AG04450 (cell line): ENCODE measurements at regions of chr1 and their contacts with region 1.

Region 1: GRCh38 chr1:155017041-155017945 is 14.7 kb downstream of the ZBTB7B start:
- DNase-seq: peak; percentile 59
- H3K4me3 ChIP-seq: peak overlapping the region; percentile 45
- H3K27ac ChIP-seq: peak overlapping the region; percentile 61
- H3K27me3 ChIP-seq: no peaks in the 10 kb centered on the region
- CTCF ChIP-seq: peak; percentile 96

Region 2: DNA sequence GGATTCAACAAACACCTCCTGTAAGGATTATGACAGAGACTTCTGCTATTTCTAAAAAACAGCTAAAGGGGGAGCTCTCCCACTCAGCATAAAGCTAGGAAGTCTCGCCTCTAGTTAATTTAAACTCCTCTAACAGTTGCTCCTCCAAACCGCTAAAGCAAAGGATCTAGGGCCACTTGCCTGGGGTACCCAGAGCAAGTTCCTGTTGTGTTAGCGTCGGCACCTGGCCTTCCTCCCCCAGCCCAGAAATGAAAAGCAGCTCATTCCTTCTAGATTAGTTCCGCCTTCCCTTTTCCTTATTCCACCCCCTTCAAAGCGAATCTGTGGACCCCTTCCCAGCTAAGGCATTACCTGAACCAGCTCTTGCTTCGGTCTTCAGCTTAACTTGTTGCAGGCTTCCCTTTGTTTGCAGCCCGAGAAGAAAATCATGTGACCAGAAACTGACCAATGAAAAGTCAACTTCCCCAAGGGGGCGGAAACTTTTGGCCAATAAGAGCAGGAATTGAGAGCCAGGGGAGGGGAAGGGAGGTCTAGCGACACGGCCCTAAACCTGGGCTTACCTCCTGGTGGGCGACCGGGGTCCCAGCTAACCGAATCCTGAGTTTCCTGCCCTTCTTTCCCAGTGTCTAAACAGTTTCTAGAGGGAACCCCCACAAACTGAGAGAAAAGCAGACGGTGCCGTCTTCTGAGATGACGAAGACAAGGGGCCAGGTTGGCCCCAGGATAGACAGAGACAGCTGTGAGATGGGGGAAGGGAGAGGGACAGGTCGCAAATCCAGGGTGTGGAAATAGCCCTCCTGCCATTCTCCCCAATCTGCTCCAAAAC is 61.4 kb before region 1 on chr1 and contains the start of gene PBXIP1:
- CTCF ChIA-PET with region 1: interaction called, 21 read pairs
- POLR2A ChIA-PET with region 1: interaction called, 10 read pairs
- DNase-seq: no peak
- H3K4me3 ChIP-seq: peak within 1 kb of the TSS; percentile 84
- H3K27ac ChIP-seq: peak within 1 kb of the TSS; percentile 88
- H3K27me3 ChIP-seq: no peaks in the 10 kb centered on the region
- CTCF ChIP-seq: peak; percentile 52
- polyA plus RNA-seq, gene PBXIP1: 72.2 and 87.1 TPM in 2 replicates

Region 3: GRCh38 chr1:154974063-154974807 is 43.1 kb before region 1 on chr1 and contains the start of gene CKS1B:
- CTCF ChIA-PET with region 1: interaction called, 19 read pairs
- POLR2A ChIA-PET with region 1: interaction called, 4 read pairs
- DNase-seq: peak; percentile 100
- H3K4me3 ChIP-seq: peak within 1 kb of the TSS; percentile 77
- H3K27ac ChIP-seq: peak within 1 kb of the TSS; percentile 100
- H3K27me3 ChIP-seq: no peaks in the 10 kb centered on the region
- CTCF ChIP-seq: no peak
- polyA plus RNA-seq, gene CKS1B: 66.4 and 81.3 TPM in 2 replicates

Region 4: DNA sequence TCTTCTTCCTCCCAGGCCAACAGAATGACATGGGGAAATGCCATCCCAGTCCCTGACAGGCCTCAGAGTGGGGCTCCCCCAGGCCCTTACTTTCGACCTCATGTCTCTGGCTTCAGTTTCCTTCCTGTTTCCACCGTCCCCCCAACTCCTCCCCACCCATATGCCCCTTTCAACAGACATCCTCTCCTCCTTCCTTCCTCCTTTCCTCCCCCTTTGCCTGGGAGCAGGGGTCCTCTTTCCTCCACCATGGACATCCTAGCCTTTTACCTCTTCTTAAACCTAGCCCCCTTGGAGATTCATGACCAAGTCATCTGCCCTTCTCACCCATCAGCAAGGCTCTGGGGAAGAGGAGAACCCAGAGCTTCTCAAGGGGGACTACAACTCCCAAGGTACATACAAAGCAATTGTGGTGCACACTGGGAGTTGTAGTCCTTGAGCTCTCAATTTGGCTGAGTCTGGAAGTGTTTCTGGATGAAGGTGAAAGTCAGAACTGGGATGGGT is 10.6 kb before region 1 on chr1:
- CTCF ChIA-PET with region 1: interaction called, 38 read pairs
- POLR2A ChIA-PET with region 1: interaction called, 4 read pairs
- DNase-seq: no peak
- H3K4me3 ChIP-seq: no peak overlapping the region
- H3K27ac ChIP-seq: no peak overlapping the region
- H3K27me3 ChIP-seq: no peaks in the 10 kb centered on the region
- CTCF ChIP-seq: no peak

Region 5: DNA sequence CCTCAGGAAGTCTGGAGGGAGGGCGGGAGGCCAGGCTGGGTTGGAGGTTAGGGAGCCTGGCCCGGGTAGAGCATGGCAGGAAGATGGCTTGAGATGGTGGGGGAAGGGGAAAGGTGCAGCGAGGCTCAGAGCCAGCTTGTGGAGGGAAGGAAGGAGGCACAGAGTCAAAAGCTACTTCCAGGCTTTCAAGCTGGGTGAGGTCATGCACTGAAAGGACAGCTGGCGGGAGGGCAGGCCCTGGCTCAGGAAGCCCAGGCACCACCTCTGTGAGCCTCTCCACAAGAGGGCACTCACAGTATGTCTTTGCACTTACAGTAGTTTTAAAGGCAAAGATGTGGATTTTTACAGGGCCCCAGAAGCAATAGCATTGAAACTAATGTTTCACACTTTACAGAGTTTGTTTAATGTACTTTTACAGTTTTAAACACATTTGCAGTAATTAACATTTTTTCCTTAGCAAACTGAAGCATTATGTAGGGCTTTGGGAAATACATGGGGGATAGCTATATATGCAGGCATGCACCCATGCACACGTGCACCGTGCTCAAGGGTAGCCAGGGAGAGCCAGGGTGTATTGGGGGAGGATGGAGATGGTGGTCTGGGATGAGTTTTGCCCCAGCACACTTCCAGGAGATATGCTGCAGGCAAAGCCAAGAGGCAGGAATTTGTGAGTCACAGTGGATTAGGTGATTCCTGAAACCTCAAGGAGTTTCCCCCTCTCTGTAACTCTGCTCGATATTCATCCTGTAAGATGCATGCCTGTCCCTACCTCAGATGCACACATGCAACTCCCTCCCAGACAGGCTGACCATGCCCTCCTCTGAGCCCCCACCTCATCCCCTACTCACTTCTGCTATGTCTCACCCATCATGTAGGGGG is 27.8 kb after region 1 on chr1:
- CTCF ChIA-PET with region 1: interaction called, 32 read pairs
- POLR2A ChIA-PET with region 1: no interaction called
- DNase-seq: peak; percentile 45
- H3K4me3 ChIP-seq: no peak overlapping the region
- H3K27ac ChIP-seq: no peak overlapping the region
- H3K27me3 ChIP-seq: peaks cover 9% of the 10 kb centered on the region
- CTCF ChIP-seq: peak; percentile 75

Region 6: GRCh38 chr1:155139895-155140631 is 122.8 kb after region 1 on chr1 and contains the start of gene DPM3:
- CTCF ChIA-PET with region 1: no interaction called
- POLR2A ChIA-PET with region 1: no interaction called
- DNase-seq: no peak
- H3K4me3 ChIP-seq: peak within 1 kb of the TSS; percentile 96
- H3K27ac ChIP-seq: peak within 1 kb of the TSS; percentile 77
- H3K27me3 ChIP-seq: peaks cover 13% of the 10 kb centered on the region
- CTCF ChIP-seq: no peak
- polyA plus RNA-seq, gene DPM3: 16.8 and 35.6 TPM in 2 replicates